CD14-positive monocyte (primary cell): ENCODE measurements at regions of chr1 and their contacts with region 1.

Region 1: GRCh38 chr1:212368073-212368484 is 46.6 kb downstream of the PACC1 start:
- DNase-seq: peak; percentile 49 to 69 (median 57)
- H3K4me3 ChIP-seq: no peak overlapping the region
- H3K4me3 Mint-ChIP-seq: no peak overlapping the region
- H3K27ac ChIP-seq: peak overlapping the region in 1 of 2 donors; percentile 60
- H3K27ac Mint-ChIP-seq: peak overlapping the region in 1 of 7 donors; percentile 33
- H3K4me1 ChIP-seq: no peaks in the 10 kb centered on the region
- H3K4me1 Mint-ChIP-seq: no peaks in the 10 kb centered on the region
- H3K27me3 ChIP-seq: no peaks in the 10 kb centered on the region
- H3K27me3 Mint-ChIP-seq: no peaks in the 10 kb centered on the region
- CTCF ChIP-seq: peak; percentile 83

Region 2: DNA sequence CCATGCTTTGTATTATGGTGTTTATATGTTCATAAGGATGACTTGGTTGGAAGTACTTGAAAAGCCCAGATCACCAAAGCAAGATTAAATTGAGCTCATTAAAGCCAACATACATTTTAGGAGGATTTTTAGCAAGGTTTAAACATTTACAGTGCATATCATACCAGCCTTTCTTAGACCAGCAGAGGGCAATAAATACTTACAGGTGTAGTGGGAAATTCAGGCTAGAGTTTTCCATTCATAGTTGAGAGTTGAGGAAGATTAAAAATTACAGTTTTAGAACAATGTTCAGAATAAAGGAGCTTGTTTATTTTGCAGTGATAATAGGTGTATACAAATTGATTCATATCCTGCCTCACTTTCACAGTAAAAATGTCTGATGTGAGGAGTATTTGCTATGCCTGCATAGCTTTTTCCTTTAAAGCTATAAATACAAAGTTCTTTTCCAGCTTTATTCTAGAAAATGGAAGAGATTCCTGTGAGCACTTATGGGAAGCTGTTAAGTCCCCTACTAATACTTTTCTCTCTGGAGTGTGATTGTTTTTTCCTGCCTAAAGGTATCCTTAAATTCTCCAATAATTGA is 297.3 kb before region 1 on chr1:
- intact Hi-C with region 1: loop called in 1 of 2 experiments (anchors 5 kb)
- DNase-seq: peak in 2 of 3 donors; percentile 33 to 38
- H3K4me3 ChIP-seq: no peak overlapping the region
- H3K4me3 Mint-ChIP-seq: no peak overlapping the region
- H3K27ac ChIP-seq: no peak overlapping the region
- H3K27ac Mint-ChIP-seq: no peak overlapping the region
- H3K4me1 ChIP-seq: no peaks in the 10 kb centered on the region
- H3K4me1 Mint-ChIP-seq: no peaks in the 10 kb centered on the region
- H3K27me3 ChIP-seq: no peaks in the 10 kb centered on the region
- H3K27me3 Mint-ChIP-seq: no peaks in the 10 kb centered on the region
- CTCF ChIP-seq: peak; percentile 75

Region 3: DNA sequence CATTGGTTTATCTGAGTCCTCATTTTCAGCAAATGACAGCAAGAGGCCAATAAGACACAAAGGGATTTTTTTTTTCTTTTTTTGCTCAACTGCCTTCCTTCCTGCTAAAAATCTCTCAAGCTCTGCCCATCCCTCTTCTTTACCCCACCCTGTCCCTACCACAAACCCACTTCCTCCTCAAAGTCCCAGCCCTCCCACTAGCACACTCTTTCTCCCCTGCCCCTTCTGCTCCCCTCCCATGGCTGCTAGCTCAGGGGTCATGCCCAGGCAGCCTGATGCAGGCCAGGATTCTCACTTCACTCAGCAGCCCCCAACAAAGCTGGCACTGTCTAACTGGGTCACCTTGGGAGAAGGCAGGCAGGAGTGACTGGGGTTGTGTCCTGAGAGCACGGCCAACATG is 111.7 kb before region 1 on chr1:
- intact Hi-C with region 1: no loop called
- DNase-seq: peak; percentile 53 to 73 (median 69)
- H3K4me3 ChIP-seq: peak overlapping the region in 2 of 3 experiments; percentile 45 to 62
- H3K4me3 Mint-ChIP-seq: peak overlapping the region; percentile 18 to 87
- H3K27ac ChIP-seq: peak overlapping the region; percentile 88 to 93
- H3K27ac Mint-ChIP-seq: peak overlapping the region; percentile 89 to 99 (median 97)
- H3K4me1 ChIP-seq: peaks cover 67 to 84% of the 10 kb centered on the region in 2 donors
- H3K4me1 Mint-ChIP-seq: peaks cover 83% of the 10 kb centered on the region
- H3K27me3 ChIP-seq: no peaks in the 10 kb centered on the region
- H3K27me3 Mint-ChIP-seq: peaks cover 0 to 3% (median 0%) of the 10 kb centered on the region in 3 donors
- CTCF ChIP-seq: no peak